Activated T-helper 1 cell treated with anti-CD3 and anti-CD28 coated beads, Interleukin-12 subunit alpha, Interleukin-12 subunit beta, Interleukin-2, Interleukin-4 antibody, amounts not matched to agents 30 ng/mL and 10 ng/mL and 1 ng/mL, durations not matched to agents 14 hours and 24 hours and 36 hours (primary cell): ENCODE measurements at regions of chr10 and their contacts with region 1.

Region 1: GRCh38 chr10:23081891-23082290 is 13.5 kb upstream of the MSRB2 start:
- DNase-seq: no peak
- H3K4me3 Mint-ChIP-seq: no peak overlapping the region
- H3K27ac Mint-ChIP-seq: no peak overlapping the region
- H3K4me1 Mint-ChIP-seq: no peaks in the 10 kb centered on the region
- H3K27me3 Mint-ChIP-seq: peaks cover 22% of the 10 kb centered on the region

Region 2: GRCh38 chr10:23293145-23293724 is 211.3 kb after region 1 on chr10:
- intact Hi-C with region 1: loop called (anchors 2 kb)
- DNase-seq: no peak
- H3K4me3 Mint-ChIP-seq: no peak overlapping the region
- H3K27ac Mint-ChIP-seq: no peak overlapping the region
- H3K4me1 Mint-ChIP-seq: no peaks in the 10 kb centered on the region
- H3K27me3 Mint-ChIP-seq: peaks cover 13% of the 10 kb centered on the region